K562 (cell line): ENCODE measurements at regions of chrX and their contacts with region 1.

Region 1: DNA sequence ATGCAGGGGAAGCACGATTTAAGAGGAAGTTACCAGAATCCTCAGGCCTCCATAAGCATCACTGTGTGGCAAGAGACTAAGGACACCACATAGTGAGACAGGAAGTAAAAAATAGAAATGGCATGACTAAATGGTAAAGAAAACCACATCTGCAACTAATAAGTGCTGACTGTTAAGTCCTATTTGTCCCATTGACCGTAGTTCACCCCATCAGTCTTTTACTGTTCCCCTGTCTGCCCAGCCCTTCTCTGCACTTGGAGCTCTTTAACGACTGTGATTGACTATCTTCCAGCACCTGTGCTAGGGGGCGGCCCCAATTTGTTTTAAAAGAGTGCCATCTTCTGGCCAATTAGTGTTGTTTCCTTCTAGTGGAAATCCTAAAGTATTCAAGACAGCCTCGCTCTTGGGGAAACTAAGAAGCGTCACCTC is 94.2 kb downstream of the MAOA start:
- DNase-seq: peak; percentile 37 to 55 (median 40)
- ATAC-seq: peak; percentile 86
- H3K4me3 ChIP-seq: no peak overlapping the region
- H3K27ac ChIP-seq: no peak overlapping the region
- H3K4me1 ChIP-seq: no peaks in the 10 kb centered on the region
- H3K27me3 ChIP-seq: peaks cover 0 to under 1% of the 10 kb centered on the region in 2 experiments; a peak in 1 of 5 replicates
- CTCF ChIP-seq: peak; percentile 47 to 68 (median 55)
- EP300 ChIP-seq: no peak
- POLR2A ChIP-seq: no peak
- RAD21 ChIP-seq: peak; percentile 73 to 82

Region 2: DNA sequence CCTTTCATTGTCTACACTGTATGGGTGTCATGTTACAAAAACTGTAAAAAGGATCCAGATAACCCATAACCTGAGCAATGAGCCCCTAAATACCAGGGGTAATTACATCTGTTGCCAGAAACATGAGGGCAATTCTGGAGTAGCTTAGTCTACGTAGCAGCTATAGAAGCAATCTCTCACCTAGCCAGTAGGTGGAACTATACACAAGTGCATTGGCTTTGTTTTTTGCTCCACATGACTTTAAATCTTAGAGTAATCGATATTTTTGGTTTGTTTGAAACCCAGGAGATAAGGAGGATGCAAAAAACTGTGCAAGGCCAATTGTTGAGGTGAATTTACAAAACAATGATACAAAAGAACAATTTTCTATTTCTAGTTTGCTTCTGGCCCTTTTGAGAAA is 1968.8 kb before region 1 on chrX:
- CTCF ChIA-PET with region 1: no interaction called
- POLR2A ChIA-PET with region 1: no interaction called
- in situ Hi-C with region 1: loop called (anchors 10 kb)
- intact Hi-C with region 1: loop called (anchors 10 kb)
- DNase-seq: peak; percentile 15 to 34 (median 28)
- ATAC-seq: peak; percentile 74
- H3K4me3 ChIP-seq: no peak overlapping the region
- H3K27ac ChIP-seq: no peak overlapping the region
- H3K4me1 ChIP-seq: no peaks in the 10 kb centered on the region
- H3K27me3 ChIP-seq: no peaks in the 10 kb centered on the region
- CTCF ChIP-seq: peak; percentile 24 to 59 (median 57); a peak in 4 of 6 replicates
- EP300 ChIP-seq: no peak
- POLR2A ChIP-seq: no peak
- RAD21 ChIP-seq: peak; percentile 56 to 79

Region 3: GRCh38 chrX:43349363-43349762 is 400.9 kb before region 1 on chrX:
- CTCF ChIA-PET with region 1: no interaction called
- POLR2A ChIA-PET with region 1: no interaction called
- in situ Hi-C with region 1: no loop called
- intact Hi-C with region 1: loop called (anchors 10 kb)
- DNase-seq: peak; percentile 11 to 40 (median 20)
- ATAC-seq: peak; percentile 76
- H3K4me3 ChIP-seq: no peak overlapping the region
- H3K27ac ChIP-seq: no peak overlapping the region
- H3K4me1 ChIP-seq: no peaks in the 10 kb centered on the region
- H3K27me3 ChIP-seq: no peaks in the 10 kb centered on the region
- CTCF ChIP-seq: peak; percentile 44 to 60 (median 59); a peak in 5 of 6 replicates
- EP300 ChIP-seq: no peak
- POLR2A ChIP-seq: no peak
- RAD21 ChIP-seq: peak; percentile 8 to 47; a peak in 2 of 4 replicates

Region 4: GRCh38 chrX:43514820-43515219 is 235.4 kb before region 1 on chrX:
- CTCF ChIA-PET with region 1: no interaction called
- POLR2A ChIA-PET with region 1: no interaction called
- in situ Hi-C with region 1: no loop called
- intact Hi-C with region 1: no loop called
- DNase-seq: no peak
- ATAC-seq: no peak
- H3K4me3 ChIP-seq: no peak overlapping the region
- H3K27ac ChIP-seq: no peak overlapping the region
- H3K4me1 ChIP-seq: no peaks in the 10 kb centered on the region
- H3K27me3 ChIP-seq: no peaks in the 10 kb centered on the region
- CTCF ChIP-seq: no peak
- EP300 ChIP-seq: no peak
- POLR2A ChIP-seq: no peak
- RAD21 ChIP-seq: no peak

Region 5: GRCh38 chrX:43654431-43655150 is 95.7 kb before region 1 on chrX:
- CTCF ChIA-PET with region 1: no interaction called
- POLR2A ChIA-PET with region 1: no interaction called
- in situ Hi-C with region 1: no loop called
- intact Hi-C with region 1: no loop called
- DNase-seq: peak; percentile 81 to 88 (median 83)
- ATAC-seq: peak; percentile 100
- H3K4me3 ChIP-seq: peak overlapping the region; percentile 43
- H3K27ac ChIP-seq: peak overlapping the region; percentile 94
- H3K4me1 ChIP-seq: peaks cover 0 to 15% of the 10 kb centered on the region in 2 experiments; a peak in 2 of 5 replicates
- H3K27me3 ChIP-seq: no peaks in the 10 kb centered on the region
- CTCF ChIP-seq: 0 out of 6 replicates have a peak, but pooled peaks of 2 of the 3 experiments have one; percentile 13 to 17
- EP300 ChIP-seq: no peak
- POLR2A ChIP-seq: no peak
- RAD21 ChIP-seq: no peak

Region 6: DNA sequence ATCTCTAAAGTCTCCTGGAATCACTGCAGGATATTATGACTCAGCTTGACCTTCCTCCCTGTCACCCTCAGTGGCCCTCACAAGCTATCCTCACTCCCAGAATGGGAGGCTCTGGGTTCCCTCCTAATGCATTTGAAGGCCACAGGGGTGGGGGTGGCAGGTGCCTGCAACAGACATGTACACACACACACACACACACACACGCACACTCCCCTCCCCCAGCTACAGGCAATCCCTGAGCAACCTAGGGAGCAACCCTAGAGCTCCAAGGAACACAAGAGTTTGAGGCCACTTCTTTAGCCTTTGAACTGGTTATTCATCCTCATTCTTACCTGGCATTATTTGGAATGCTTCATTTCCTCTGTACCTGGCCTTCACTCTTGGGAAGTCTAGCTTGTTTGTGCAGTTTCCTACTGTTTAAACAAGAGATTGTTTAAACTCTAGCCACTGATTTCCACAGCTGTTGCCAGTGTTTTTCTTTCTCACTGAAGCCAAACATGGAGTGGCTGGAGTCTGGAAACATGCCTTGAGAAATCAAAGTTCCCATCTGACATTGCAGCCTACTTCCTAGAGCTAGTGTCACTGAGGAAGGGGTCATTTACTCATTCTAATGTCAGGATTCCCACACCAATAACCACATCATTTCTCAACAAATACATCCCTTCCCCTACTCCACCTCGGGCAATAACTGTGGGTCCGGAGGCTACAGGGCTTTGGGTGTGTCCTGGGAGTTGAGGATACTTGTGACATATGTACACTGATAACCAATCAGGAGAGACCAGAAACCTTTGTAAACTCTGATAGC is 56.5 kb before region 1 on chrX:
- CTCF ChIA-PET with region 1: no interaction called
- POLR2A ChIA-PET with region 1: no interaction called
- in situ Hi-C with region 1: no loop called
- intact Hi-C with region 1: no loop called
- DNase-seq: no peak
- ATAC-seq: no peak
- H3K4me3 ChIP-seq: no peak overlapping the region
- H3K27ac ChIP-seq: no peak overlapping the region
- H3K4me1 ChIP-seq: no peaks in the 10 kb centered on the region
- H3K27me3 ChIP-seq: no peaks in the 10 kb centered on the region
- CTCF ChIP-seq: no peak
- EP300 ChIP-seq: no peak
- POLR2A ChIP-seq: no peak
- RAD21 ChIP-seq: no peak

Region 7: GRCh38 chrX:43813898-43814297 is 63.6 kb after region 1 on chrX:
- CTCF ChIA-PET with region 1: no interaction called
- POLR2A ChIA-PET with region 1: no interaction called
- in situ Hi-C with region 1: no loop called
- intact Hi-C with region 1: no loop called
- DNase-seq: peak in 2 of 4 experiments; percentile 5 to 15
- ATAC-seq: peak; percentile 49; the same call in 1 of the 3 replicates
- H3K4me3 ChIP-seq: no peak overlapping the region
- H3K27ac ChIP-seq: no peak overlapping the region
- H3K4me1 ChIP-seq: no peaks in the 10 kb centered on the region
- H3K27me3 ChIP-seq: no peaks in the 10 kb centered on the region
- CTCF ChIP-seq: peak; percentile 17 to 42 (median 28); a peak in 2 of 6 replicates
- EP300 ChIP-seq: no peak
- POLR2A ChIP-seq: no peak
- RAD21 ChIP-seq: 0 out of 4 replicates have a peak, but pooled peaks of 1 of the 2 experiments have one; percentile 13